Activated CD8-positive, alpha-beta T cell treated with anti-CD3 and anti-CD28 coated beads, Interleukin-2, amount 10 ng/mL, durations not matched to agents 7 days and 5 days (primary cell): ENCODE measurements at regions of chr2 and their contacts with region 1.

Region 1: DNA sequence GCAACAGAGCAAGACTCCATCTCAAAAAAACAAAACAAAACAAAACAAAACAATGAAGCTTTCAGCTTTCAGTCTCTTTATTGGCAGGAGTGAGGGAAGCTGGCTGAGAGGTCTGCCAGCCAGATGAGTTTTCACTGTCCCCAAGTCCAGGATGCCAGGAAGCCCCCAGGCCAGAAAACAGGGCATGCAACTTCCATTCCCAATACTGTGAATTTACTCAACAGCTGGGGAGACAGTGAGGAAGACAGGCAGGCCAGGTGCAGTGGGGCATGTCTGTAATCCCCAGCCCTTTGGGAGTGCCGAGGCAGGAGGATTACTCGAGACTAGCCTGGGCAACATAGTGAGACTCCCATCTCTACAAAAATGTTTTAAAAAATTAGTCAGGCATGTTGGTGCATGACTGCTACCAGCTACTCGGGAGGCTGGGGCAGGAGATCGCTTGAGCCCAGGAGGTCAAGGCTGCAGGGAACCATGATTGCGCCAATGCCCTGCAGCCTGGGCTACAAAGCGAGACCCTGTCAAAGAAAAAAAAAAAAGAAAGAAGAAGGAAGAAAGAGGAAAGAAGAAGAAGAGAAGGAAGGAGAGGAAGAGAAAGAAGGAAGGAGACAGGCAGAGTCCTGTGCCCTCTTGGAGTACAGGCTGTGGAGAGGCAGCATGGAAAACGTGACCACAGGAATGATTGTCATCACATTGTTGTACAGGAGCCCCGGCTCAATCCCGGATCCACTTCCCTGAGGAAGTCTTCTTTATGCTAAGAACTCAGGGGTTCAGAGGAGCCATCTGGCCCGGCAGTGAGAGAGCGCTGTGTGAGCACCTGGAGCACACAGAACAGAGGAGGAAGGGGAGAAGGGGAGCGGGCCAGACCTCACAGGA is 29.2 kb upstream of the POMC start:
- DNase-seq: no peak
- ATAC-seq: no peak
- H3K4me3 Mint-ChIP-seq: no peak overlapping the region
- H3K27ac Mint-ChIP-seq: no peak overlapping the region
- H3K4me1 Mint-ChIP-seq: peaks cover 13% of the 10 kb centered on the region
- H3K27me3 Mint-ChIP-seq: peaks cover 5% of the 10 kb centered on the region

Region 2: GRCh38 chr2:25115902-25116301 is 81.7 kb before region 1 on chr2:
- CTCF ChIA-PET with region 1: no interaction called
- POLR2A ChIA-PET with region 1: no interaction called
- DNase-seq: no peak
- ATAC-seq: no peak
- H3K4me3 Mint-ChIP-seq: no peak overlapping the region
- H3K27ac Mint-ChIP-seq: no peak overlapping the region
- H3K4me1 Mint-ChIP-seq: no peaks in the 10 kb centered on the region
- H3K27me3 Mint-ChIP-seq: peaks cover 5% of the 10 kb centered on the region

Region 3: DNA sequence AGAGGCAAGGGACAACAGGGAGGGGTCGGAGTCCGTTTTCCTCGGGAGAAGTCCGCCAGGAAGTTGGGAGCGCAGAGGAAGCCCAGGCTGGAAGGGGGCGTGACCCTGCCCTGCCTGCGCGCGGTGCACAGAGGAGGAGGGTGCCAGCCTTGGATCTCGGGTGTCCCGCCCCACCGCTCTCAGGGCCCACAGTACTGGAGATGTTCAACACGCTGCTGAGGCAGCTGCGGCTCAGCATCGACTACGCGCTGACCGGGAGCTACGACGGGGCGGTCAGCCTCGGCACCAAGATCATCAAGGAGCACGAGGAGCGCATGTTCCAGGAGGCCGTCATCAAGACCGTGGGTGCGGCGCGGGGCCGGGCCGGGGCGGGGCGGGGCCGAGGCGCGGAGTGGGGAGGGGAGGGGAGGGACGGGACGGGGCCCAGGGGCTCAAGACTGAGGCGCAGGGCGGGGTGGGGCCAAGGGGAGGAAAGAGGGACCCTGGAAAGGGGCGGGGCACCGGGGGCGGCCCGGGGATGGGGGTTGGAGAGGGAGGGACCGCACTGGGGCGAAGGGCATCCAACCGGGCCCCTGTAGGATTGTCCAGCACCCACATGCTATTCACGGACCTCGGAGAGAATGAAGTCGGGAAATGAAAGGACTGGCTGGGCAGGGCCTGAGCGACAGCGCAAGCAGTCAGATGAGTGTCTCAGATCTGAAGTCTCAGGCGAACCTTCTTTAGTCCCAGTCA is 65.8 kb before region 1 on chr2:
- CTCF ChIA-PET with region 1: interaction called, 30 read pairs
- POLR2A ChIA-PET with region 1: no interaction called
- DNase-seq: no peak
- ATAC-seq: peak; percentile 29
- H3K4me3 Mint-ChIP-seq: peak overlapping the region; percentile 44
- H3K27ac Mint-ChIP-seq: no peak overlapping the region
- H3K4me1 Mint-ChIP-seq: peaks cover 7% of the 10 kb centered on the region
- H3K27me3 Mint-ChIP-seq: peaks cover 52% of the 10 kb centered on the region

Region 4: GRCh38 chr2:25165992-25166875 is 31.3 kb before region 1 on chr2:
- CTCF ChIA-PET with region 1: interaction called, 80 read pairs
- POLR2A ChIA-PET with region 1: no interaction called
- DNase-seq: peak; percentile 70
- ATAC-seq: peak; percentile 68
- H3K4me3 Mint-ChIP-seq: no peak overlapping the region
- H3K27ac Mint-ChIP-seq: no peak overlapping the region
- H3K4me1 Mint-ChIP-seq: peaks cover 27% of the 10 kb centered on the region
- H3K27me3 Mint-ChIP-seq: peaks cover 47% of the 10 kb centered on the region